ENCODE measurements at regions of chr22 and their contacts with region 1.

Region 1: GRCh38 chr22:36194971-36195370 is 6.6 kb downstream of the APOL4 start:
- DNase-seq: peak; percentile 74
- H3K4me3 ChIP-seq: no peak overlapping the region
- H3K27ac ChIP-seq: no peak overlapping the region
- H3K4me1 ChIP-seq: peaks cover 33% of the 10 kb centered on the region
- H3K27me3 ChIP-seq: peaks cover 0 to 6% of the 10 kb centered on the region in 2 experiments
- CTCF ChIP-seq: peak; percentile 68 to 76
- POLR2A ChIP-seq: no peak

Region 2: DNA sequence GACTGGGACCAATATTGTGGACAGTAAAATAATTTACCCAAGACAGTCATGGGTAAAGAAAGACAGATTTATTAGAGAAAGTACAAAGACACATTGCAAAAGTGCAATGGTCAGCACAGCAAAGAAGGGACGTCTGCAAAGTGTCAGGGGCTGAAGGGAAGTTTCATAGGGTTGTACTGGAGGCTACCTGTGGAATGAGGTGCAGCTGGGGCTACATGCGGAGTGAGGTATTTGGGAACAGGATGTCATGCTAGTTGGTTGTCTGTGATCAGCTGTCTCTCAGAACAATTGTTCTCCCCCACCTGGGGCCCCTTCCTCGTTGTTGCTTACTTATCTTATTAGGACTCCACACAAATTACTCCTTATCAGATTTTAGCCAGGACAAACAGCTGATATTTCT is 23.0 kb before region 1 on chr22:
- CTCF ChIA-PET with region 1: interaction called, 3 read pairs
- POLR2A ChIA-PET with region 1: no interaction called
- dilution Hi-C with region 1: no loop called
- intact Hi-C with region 1: loop called (anchors 1 kb)
- DNase-seq: no peak
- H3K4me3 ChIP-seq: no peak overlapping the region
- H3K27ac ChIP-seq: no peak overlapping the region
- H3K4me1 ChIP-seq: no peaks in the 10 kb centered on the region
- H3K27me3 ChIP-seq: peaks cover 2 to 4% of the 10 kb centered on the region in 2 experiments
- CTCF ChIP-seq: no peak
- POLR2A ChIP-seq: no peak

Region 3: DNA sequence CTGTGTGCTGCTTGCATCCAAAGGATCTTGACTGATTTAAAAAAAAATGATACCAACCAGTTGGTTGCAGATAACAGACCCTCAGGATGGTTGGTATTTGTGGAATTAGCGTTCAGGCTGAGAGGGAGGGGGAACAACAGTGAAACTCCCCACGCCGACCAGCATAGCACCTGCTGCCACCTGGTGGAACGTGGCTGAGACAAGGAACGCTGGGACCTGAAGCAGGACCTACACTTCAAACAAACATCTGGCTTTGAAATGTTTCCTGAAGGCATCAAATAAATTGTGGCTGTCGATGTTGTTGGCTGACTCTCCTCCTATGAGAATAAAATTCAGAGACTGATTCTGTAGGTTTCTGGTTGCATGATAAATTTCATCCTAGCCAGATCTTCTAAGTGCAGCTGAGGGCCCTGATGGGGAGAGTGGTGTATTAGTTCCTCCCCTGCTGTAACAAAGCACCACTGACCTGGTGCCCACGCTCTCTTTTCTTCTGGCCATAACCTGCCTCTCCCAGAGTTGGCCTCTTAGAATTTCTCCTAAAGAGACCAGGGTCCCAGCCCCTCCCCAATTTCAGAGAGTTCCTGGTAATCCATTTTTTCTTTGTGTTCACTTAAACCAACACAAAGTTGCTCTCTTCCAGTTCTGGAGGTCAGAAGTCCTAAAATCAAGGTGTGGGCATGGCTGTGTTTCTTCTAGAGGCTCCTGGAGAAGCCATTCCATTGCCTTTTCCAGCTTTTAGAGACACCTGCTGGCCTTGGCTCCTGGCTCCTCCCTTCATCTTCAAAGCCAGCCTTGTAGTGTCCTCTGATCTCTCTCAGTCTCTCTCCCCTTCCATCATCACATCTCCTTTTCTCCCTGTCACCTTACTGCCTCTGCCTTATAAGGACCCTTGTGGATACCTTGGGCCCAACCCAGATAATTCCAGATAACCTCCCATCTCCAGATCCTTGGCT is 27.1 kb after region 1 on chr22:
- CTCF ChIA-PET with region 1: interaction called, 26 read pairs
- POLR2A ChIA-PET with region 1: no interaction called
- dilution Hi-C with region 1: no loop called
- intact Hi-C with region 1: loop called (anchors 1 kb)
- DNase-seq: peak; percentile 60
- H3K4me3 ChIP-seq: no peak overlapping the region
- H3K27ac ChIP-seq: no peak overlapping the region
- H3K4me1 ChIP-seq: peaks cover 4% of the 10 kb centered on the region
- H3K27me3 ChIP-seq: peaks cover 9 to 10% of the 10 kb centered on the region in 2 experiments
- CTCF ChIP-seq: peak; percentile 69 to 78
- POLR2A ChIP-seq: no peak

Region 4: GRCh38 chr22:36277482-36278291 is 82.7 kb after region 1 on chr22:
- CTCF ChIA-PET with region 1: interaction called, 16 read pairs
- POLR2A ChIA-PET with region 1: no interaction called
- dilution Hi-C with region 1: no loop called
- intact Hi-C with region 1: loop called (anchors 5 kb)
- DNase-seq: peak; percentile 59
- H3K4me3 ChIP-seq: no peak overlapping the region
- H3K27ac ChIP-seq: no peak overlapping the region
- H3K4me1 ChIP-seq: no peaks in the 10 kb centered on the region
- H3K27me3 ChIP-seq: no peaks in the 10 kb centered on the region
- CTCF ChIP-seq: peak; percentile 65 to 88
- POLR2A ChIP-seq: peak; percentile 18

Region 5: DNA sequence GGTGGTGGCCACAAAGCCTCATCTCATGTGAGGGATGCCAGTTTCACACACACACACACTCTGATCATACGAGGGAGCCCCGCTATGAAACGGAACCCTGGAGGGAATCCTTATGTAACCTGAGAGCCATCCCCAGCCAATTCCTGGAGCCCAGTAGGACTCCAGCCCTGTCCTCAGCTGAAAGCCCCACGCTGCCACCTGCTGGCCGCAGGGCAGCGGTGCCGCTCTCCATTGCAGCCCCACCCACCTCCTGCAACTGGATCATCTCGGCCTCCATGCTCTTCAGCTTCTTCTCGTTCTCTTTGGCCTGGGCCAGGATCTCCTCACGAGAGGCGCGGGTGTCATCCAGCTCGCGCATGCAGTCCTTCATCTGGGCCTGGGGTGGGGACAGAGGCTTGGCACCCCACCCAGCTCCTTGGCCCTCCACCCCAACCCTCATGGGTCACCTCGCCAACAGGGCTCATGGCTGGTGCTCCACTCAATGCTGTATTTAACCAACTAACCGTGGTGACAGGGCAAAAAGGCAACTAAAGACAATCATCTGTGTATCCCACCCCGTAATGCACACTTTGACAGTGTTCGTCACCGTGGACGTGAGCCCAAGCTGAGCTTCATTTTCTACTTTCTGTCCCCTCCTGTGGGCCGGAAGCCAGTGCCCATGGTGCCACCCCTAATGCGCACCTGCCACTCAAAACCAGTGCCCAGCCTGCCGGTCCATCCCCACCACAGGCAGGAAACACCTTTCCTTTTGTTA is 91.7 kb after region 1 on chr22:
- CTCF ChIA-PET with region 1: interaction called, 17 read pairs
- POLR2A ChIA-PET with region 1: no interaction called
- dilution Hi-C with region 1: no loop called
- intact Hi-C with region 1: no loop called
- DNase-seq: peak; percentile 68
- H3K4me3 ChIP-seq: no peak overlapping the region
- H3K27ac ChIP-seq: no peak overlapping the region
- H3K4me1 ChIP-seq: no peaks in the 10 kb centered on the region
- H3K27me3 ChIP-seq: no peaks in the 10 kb centered on the region
- CTCF ChIP-seq: peak; percentile 95 to 96
- POLR2A ChIP-seq: peak; percentile 41